Esophagus squamous epithelium (tissue), 5 donors: ENCODE measurements at regions of chr17 and their contacts with region 1.

Region 1: DNA sequence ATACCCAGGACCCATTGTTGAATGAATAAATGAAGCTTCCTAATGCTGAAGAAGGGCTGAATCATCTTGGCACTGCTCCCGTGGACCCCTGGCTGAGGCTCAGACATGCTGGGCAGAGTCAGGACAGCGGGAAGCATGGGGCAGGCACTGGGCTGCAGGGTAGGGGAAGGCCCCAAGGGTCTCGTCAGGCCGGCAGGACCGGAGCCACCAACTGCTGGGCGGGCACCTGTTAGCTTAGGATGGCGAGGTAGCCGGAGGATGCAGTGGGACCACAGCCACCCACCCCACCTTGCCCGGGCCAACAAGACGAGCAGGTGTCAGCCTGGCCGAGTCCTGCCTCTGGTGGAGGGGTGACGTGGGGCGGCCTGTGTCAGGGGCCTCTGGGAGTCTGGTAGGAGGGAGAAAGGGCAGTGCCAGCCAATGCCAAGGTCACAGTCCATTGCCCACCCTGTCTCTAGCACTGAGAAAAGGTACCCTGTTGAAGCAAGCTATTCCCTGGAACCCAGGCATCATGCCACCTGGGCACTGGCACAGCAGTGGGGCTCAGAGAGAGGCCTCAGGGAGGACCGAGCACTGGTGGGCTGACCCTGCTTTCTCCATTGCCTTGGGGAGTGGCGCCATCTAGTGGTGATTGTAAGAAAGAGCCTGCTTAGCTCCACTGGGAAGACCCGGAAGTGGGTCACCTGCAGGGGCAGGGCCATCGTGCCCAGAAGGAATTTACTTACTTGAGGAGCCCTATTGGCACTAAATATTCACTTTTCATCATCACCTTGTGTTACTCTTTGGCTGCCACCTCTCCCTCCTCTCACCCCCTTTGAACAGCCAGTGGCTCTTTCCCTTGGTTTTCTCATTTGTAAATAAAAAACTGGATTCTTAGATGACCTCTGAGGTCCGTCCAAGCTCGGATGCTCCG is 3.0 kb upstream of the DLX3 start:
- DNase-seq: no peak
- H3K4me3 ChIP-seq: no peak overlapping the region
- H3K27ac ChIP-seq: no peak overlapping the region
- H3K4me1 ChIP-seq: peaks cover 31 to 54% (median 35%) of the 10 kb centered on the region in 3 donors
- H3K27me3 ChIP-seq: peaks cover 0 to 98% (median 7%) of the 10 kb centered on the region in 4 donors
- CTCF ChIP-seq: peak; percentile 92 to 97 (median 95)
- POLR2A ChIP-seq: no peak

Region 2: DNA sequence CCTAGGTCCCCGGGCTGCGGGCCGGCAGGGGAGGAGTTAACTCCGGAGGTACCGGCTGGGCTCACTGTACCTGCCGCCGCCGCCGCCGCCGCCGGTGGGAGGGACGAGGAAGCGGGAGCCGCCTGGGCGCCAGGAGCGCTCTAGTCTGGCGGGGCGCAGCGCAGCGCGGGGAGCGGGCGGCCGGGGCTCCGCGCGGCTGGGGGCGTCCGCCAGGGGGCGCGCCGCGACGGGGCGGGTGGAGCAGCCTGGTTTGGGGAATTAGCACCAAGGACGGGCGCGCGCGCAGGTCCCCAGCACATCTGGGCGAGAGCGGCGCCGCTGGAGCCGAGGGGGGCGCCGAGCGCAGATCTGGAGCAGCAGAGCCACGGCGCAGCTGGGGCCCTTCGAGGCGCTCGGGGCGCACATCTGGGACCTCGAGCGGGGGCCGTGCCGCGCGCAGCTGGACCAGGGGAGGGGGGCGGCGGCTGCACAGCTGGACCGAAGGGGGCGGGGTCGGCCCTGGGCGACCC is 422.4 kb before region 1 on chr17 and contains the start of gene NXPH3:
- intact Hi-C with region 1: loop called (anchors 10 kb)
- DNase-seq: no peak
- H3K4me3 ChIP-seq: peak within 1 kb of the TSS; percentile 45 to 78 (median 60)
- H3K27ac ChIP-seq: peak within 1 kb of the TSS; percentile 64 to 90 (median 80)
- H3K4me1 ChIP-seq: peaks cover 25 to 59% (median 28%) of the 10 kb centered on the region in 3 donors
- H3K27me3 ChIP-seq: peaks cover 0 to 46% (median 0%) of the 10 kb centered on the region in 4 donors
- CTCF ChIP-seq: peak in 4 of 6 experiments; percentile 79 to 89 (median 86)
- POLR2A ChIP-seq: peak in 1 of 4 donors; percentile 21
- total RNA-seq, gene NXPH3: 0.53 to 3.8 (median 1.5) TPM

Region 3: DNA sequence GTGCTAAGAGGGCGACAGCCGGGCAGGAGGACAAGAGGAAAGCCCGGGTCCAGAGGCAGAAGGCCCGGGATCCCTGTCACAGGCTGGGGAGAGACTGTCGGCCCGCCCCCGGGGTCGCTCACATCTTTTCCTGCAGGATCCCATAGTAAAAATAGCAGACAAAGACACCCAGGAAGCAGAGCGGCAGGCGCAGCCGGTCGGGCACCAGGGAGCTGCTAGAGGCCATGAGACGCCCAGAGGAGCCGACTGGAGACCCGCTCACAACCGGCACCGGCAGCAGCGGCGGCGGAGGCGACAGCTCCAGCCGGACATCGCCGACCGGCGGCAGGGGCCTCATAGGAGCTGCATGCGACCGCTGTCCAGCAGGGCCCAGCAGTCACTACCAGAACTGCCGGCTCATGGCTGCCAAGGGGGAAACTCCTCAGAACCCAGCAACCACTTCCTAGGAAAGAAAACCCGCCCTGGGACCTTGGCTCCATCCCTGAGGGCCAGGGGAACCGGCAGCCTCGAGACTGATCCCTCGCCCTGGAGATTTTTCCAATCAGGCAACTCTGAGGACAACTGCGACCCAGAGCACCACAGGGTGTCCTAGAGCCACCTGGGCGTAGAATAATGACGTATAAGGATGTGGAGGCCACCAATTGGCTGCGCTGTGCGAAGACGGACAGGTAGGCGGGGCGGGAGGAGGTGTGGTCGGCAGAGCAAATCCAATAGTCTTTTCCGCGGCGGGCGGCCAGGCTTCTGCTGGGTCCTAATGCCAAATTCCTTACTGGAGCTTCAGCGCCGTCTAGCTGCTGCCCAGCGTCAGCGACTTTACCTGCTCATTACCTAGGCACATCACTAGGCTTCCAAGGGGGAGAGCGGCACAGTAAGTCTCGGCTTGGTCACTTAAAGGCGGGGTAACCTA is 290.2 kb before region 1 on chr17 and contains the start of gene SLC35B1:
- intact Hi-C with region 1: loop called (anchors 5 kb)
- DNase-seq: peak; percentile 96
- H3K4me3 ChIP-seq: peak within 1 kb of the TSS; percentile 75 to 94 (median 90)
- H3K27ac ChIP-seq: peak within 1 kb of the TSS; percentile 91 to 96 (median 92)
- H3K4me1 ChIP-seq: peaks cover 11 to 51% (median 21%) of the 10 kb centered on the region in 3 donors
- H3K27me3 ChIP-seq: no peaks in the 10 kb centered on the region
- CTCF ChIP-seq: peak; percentile 67 to 86 (median 83)
- POLR2A ChIP-seq: peak in 3 of 4 donors; percentile 40 to 57 (median 52)
- total RNA-seq, gene SLC35B1: 32.4 to 68.5 (median 36.2) TPM

Region 4: GRCh38 chr17:49861150-49861892 is 136.7 kb before region 1 on chr17:
- intact Hi-C with region 1: loop called (anchors 2 kb)
- DNase-seq: no peak
- H3K4me3 ChIP-seq: no peak overlapping the region
- H3K27ac ChIP-seq: no peak overlapping the region
- H3K4me1 ChIP-seq: peaks cover 0 to 17% (median 0%) of the 10 kb centered on the region in 3 donors
- H3K27me3 ChIP-seq: peaks cover 0 to 15% (median 0%) of the 10 kb centered on the region in 4 donors
- CTCF ChIP-seq: peak; percentile 61 to 94 (median 78)
- POLR2A ChIP-seq: no peak

Region 5: DNA sequence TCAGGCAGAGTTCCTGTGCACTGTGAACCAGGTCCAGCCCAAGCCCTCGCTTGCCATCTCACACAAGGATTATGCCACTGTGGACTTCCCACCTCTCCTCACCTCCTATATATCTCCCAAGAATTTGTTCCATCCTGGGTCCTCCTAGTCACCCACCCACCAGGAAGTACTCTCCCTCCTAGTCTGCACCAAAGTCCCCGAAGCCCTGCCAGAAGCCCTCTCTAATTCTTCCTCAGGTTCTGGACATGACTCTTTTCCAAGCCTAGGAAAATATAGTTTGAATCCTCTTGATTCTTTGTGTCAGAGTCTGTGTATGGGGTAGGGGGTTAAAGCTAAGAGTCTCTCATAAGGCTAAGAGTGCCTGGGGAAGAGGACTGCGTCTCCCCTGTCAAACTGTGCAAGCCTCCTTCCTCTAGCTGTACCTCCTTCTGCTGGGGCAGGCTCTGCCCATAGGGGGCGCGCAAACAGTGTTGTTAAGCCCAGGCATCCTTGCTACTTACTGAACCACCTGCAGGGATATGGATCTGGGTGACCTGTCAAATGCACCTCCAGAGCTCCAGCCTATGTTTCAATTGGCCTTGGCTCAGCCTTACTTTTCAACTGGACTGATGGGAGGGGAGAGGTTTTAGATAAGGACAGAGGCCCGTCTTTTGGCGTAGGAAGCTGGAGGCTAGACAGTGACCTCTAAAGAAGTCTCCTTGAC is 45.7 kb before region 1 on chr17:
- intact Hi-C with region 1: loop called (anchors 5 kb)
- DNase-seq: no peak
- H3K4me3 ChIP-seq: no peak overlapping the region
- H3K27ac ChIP-seq: no peak overlapping the region
- H3K4me1 ChIP-seq: no peaks in the 10 kb centered on the region
- H3K27me3 ChIP-seq: peaks cover 0 to 78% (median 0%) of the 10 kb centered on the region in 4 donors
- CTCF ChIP-seq: peak; percentile 51 to 90 (median 78)
- POLR2A ChIP-seq: no peak